Right cardiac atrium (tissue), 5 donors: ENCODE measurements at regions of chrX and their contacts with region 1.

Region 1: DNA sequence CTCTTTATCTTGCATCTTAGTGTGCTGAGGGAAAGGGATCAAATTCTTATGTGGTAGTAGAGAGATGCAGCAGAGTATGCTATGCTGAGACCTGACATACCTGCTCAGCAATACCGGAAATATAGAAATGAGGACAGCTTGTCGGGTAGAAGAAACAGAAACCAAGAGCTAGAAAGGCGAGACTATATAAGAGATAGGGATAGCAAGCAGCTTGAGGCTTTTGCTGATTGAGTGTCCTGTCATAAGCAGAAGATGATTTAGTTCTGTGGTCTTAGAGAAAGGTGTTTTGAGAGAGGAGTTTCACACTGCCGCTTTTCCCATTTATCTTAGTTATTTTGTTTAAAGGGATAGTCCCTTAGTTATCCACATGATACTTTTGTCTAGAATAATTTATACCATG is 31.7 kb downstream of the USP9X start:
- DNase-seq: no peak
- ATAC-seq: no peak
- H3K4me3 ChIP-seq: no peak overlapping the region
- H3K27ac ChIP-seq: no peak overlapping the region
- H3K4me1 ChIP-seq: peaks cover 1% of the 10 kb centered on the region
- H3K27me3 ChIP-seq: no peaks in the 10 kb centered on the region

Region 2: GRCh38 chrX:40651620-40652223 is 465.2 kb before region 1 on chrX:
- intact Hi-C with region 1: loop called in 2 of 4 experiments (anchors 10 kb)
- DNase-seq: peak in 2 of 3 donors; percentile 62 to 73
- ATAC-seq: no peak
- H3K4me3 ChIP-seq: no peak overlapping the region
- H3K27ac ChIP-seq: no peak overlapping the region
- H3K4me1 ChIP-seq: no peaks in the 10 kb centered on the region
- H3K27me3 ChIP-seq: no peaks in the 10 kb centered on the region

Region 3: GRCh38 chrX:40887476-40887875 is 229.5 kb before region 1 on chrX:
- intact Hi-C with region 1: loop called in 1 of 4 experiments (anchors 10 kb)
- DNase-seq: no peak
- ATAC-seq: no peak
- H3K4me3 ChIP-seq: no peak overlapping the region
- H3K27ac ChIP-seq: no peak overlapping the region
- H3K4me1 ChIP-seq: no peaks in the 10 kb centered on the region
- H3K27me3 ChIP-seq: no peaks in the 10 kb centered on the region

Region 4: GRCh38 chrX:41033299-41033698 is 83.6 kb before region 1 on chrX:
- intact Hi-C with region 1: no loop called
- DNase-seq: no peak
- ATAC-seq: no peak
- H3K4me3 ChIP-seq: no peak overlapping the region
- H3K27ac ChIP-seq: no peak overlapping the region
- H3K4me1 ChIP-seq: no peaks in the 10 kb centered on the region
- H3K27me3 ChIP-seq: no peaks in the 10 kb centered on the region